CD4-positive, alpha-beta T cell (primary cell): ENCODE measurements at regions of chr1 and their contacts with region 1.

Region 1: GRCh38 chr1:10032590-10033358 is at the start of gene UBE4B:
- DNase-seq: peak; percentile 96 to 100 (median 99)
- ATAC-seq: peak; percentile 93
- H3K4me3 ChIP-seq: peak within 1 kb of the TSS; percentile 99
- H3K4me3 Mint-ChIP-seq: peak within 1 kb of the TSS; percentile 98
- H3K27ac ChIP-seq: peak within 1 kb of the TSS; percentile 91 to 95
- H3K27ac Mint-ChIP-seq: peak within 1 kb of the TSS; percentile 99
- H3K4me1 ChIP-seq: peaks cover 28% of the 10 kb centered on the region
- H3K4me1 Mint-ChIP-seq: peaks cover 30% of the 10 kb centered on the region
- H3K27me3 ChIP-seq: no peaks in the 10 kb centered on the region
- H3K27me3 Mint-ChIP-seq: no peaks in the 10 kb centered on the region
- CTCF ChIP-seq: peak; percentile 74
- total RNA-seq, gene UBE4B: 27.9 to 28.7 TPM

Region 2: DNA sequence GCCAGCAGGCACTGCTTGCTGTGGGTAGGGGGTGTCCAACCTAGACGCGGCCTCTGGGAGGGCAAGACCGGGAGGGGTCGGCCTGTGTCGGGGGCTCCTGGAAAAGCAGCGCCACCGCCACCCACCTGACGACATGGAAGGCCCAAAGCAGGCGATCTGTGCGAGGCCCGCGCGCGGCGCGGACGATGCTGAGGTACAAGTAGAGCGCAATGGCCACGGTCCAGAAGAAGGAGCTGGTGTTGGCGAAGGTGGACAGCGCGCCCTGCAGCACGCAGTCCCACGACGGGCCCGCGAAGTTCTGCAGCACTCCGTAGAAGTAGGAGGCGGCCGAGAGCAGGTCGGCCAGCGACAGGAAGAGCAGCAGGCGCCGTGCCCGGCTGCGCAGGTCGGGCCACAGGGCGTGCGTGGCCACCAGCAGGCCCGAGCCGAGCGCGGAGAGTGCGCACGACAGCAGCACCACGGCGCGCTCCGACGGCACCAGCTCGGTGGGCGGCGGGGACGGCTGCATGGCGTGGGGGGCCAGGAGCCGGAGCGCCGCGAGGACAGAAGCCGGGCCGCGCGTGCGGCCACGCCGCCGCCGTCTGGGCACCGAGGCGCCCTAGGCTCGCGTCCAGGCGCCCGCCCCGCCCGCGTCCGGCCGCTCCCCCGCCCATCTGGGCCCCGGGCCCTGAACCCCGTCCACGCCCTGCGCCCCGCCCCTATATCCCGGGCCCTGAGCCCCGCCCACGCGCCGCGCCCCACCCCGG is 904.1 kb before region 1 on chr1 and contains the start of gene GPR157:
- CTCF ChIA-PET with region 1: no interaction called
- POLR2A ChIA-PET with region 1: no interaction called
- intact Hi-C with region 1: loop called in 1 of 2 experiments (anchors 5 kb)
- DNase-seq: peak; percentile 65 to 93 (median 81)
- ATAC-seq: peak; percentile 86
- H3K4me3 ChIP-seq: peak within 1 kb of the TSS; percentile 70
- H3K4me3 Mint-ChIP-seq: peak within 1 kb of the TSS; percentile 91
- H3K27ac ChIP-seq: peak within 1 kb of the TSS; percentile 56
- H3K27ac Mint-ChIP-seq: peak within 1 kb of the TSS; percentile 70
- H3K4me1 ChIP-seq: peaks cover 25% of the 10 kb centered on the region
- H3K4me1 Mint-ChIP-seq: peaks cover 40% of the 10 kb centered on the region
- H3K27me3 ChIP-seq: no peaks in the 10 kb centered on the region
- H3K27me3 Mint-ChIP-seq: no peaks in the 10 kb centered on the region
- CTCF ChIP-seq: no peak
- total RNA-seq, gene GPR157: 2.1 to 5.1 TPM

Region 3: GRCh38 chr1:9588551-9589143 is 444.1 kb before region 1 on chr1 and contains the start of gene TMEM201:
- CTCF ChIA-PET with region 1: no interaction called
- POLR2A ChIA-PET with region 1: no interaction called
- intact Hi-C with region 1: loop called in 1 of 2 experiments (anchors 5 kb)
- DNase-seq: peak; percentile 87 to 98 (median 94)
- ATAC-seq: peak; percentile 91
- H3K4me3 ChIP-seq: peak within 1 kb of the TSS; percentile 66
- H3K4me3 Mint-ChIP-seq: peak within 1 kb of the TSS; percentile 92
- H3K27ac ChIP-seq: no peak within 1 kb of the TSS
- H3K27ac Mint-ChIP-seq: peak within 1 kb of the TSS; percentile 65
- H3K4me1 ChIP-seq: peaks cover 38% of the 10 kb centered on the region
- H3K4me1 Mint-ChIP-seq: peaks cover 33% of the 10 kb centered on the region
- H3K27me3 ChIP-seq: no peaks in the 10 kb centered on the region
- H3K27me3 Mint-ChIP-seq: no peaks in the 10 kb centered on the region
- CTCF ChIP-seq: peak; percentile 6
- total RNA-seq, gene TMEM201: 9.1 to 9.2 TPM

Region 4: GRCh38 chr1:9874959-9875635 is 157.7 kb before region 1 on chr1:
- CTCF ChIA-PET with region 1: no interaction called
- POLR2A ChIA-PET with region 1: no interaction called
- intact Hi-C with region 1: loop called (anchors 1 kb)
- DNase-seq: peak; percentile 62 to 87 (median 68)
- ATAC-seq: peak; percentile 99
- H3K4me3 ChIP-seq: no peak overlapping the region
- H3K4me3 Mint-ChIP-seq: no peak overlapping the region
- H3K27ac ChIP-seq: no peak overlapping the region
- H3K27ac Mint-ChIP-seq: no peak overlapping the region
- H3K4me1 ChIP-seq: peaks cover 7% of the 10 kb centered on the region
- H3K4me1 Mint-ChIP-seq: peaks cover 7% of the 10 kb centered on the region
- H3K27me3 ChIP-seq: no peaks in the 10 kb centered on the region
- H3K27me3 Mint-ChIP-seq: no peaks in the 10 kb centered on the region
- CTCF ChIP-seq: peak; percentile 93

Region 5: GRCh38 chr1:10209905-10210810 is 177.4 kb after region 1 on chr1 and contains the start of gene KIF1B:
- CTCF ChIA-PET with region 1: no interaction called
- POLR2A ChIA-PET with region 1: no interaction called
- intact Hi-C with region 1: loop called in 1 of 2 experiments (anchors 5 kb)
- DNase-seq: peak; percentile 91 to 98 (median 96)
- ATAC-seq: peak; percentile 99
- H3K4me3 ChIP-seq: peak within 1 kb of the TSS; percentile 76
- H3K4me3 Mint-ChIP-seq: peak within 1 kb of the TSS; percentile 94
- H3K27ac ChIP-seq: no peak within 1 kb of the TSS
- H3K27ac Mint-ChIP-seq: peak within 1 kb of the TSS; percentile 82
- H3K4me1 ChIP-seq: peaks cover 17% of the 10 kb centered on the region
- H3K4me1 Mint-ChIP-seq: peaks cover 37% of the 10 kb centered on the region
- H3K27me3 ChIP-seq: no peaks in the 10 kb centered on the region
- H3K27me3 Mint-ChIP-seq: peaks cover 4% of the 10 kb centered on the region
- CTCF ChIP-seq: peak; percentile 99
- total RNA-seq, gene KIF1B: 7.9 to 9.7 TPM

Region 6: DNA sequence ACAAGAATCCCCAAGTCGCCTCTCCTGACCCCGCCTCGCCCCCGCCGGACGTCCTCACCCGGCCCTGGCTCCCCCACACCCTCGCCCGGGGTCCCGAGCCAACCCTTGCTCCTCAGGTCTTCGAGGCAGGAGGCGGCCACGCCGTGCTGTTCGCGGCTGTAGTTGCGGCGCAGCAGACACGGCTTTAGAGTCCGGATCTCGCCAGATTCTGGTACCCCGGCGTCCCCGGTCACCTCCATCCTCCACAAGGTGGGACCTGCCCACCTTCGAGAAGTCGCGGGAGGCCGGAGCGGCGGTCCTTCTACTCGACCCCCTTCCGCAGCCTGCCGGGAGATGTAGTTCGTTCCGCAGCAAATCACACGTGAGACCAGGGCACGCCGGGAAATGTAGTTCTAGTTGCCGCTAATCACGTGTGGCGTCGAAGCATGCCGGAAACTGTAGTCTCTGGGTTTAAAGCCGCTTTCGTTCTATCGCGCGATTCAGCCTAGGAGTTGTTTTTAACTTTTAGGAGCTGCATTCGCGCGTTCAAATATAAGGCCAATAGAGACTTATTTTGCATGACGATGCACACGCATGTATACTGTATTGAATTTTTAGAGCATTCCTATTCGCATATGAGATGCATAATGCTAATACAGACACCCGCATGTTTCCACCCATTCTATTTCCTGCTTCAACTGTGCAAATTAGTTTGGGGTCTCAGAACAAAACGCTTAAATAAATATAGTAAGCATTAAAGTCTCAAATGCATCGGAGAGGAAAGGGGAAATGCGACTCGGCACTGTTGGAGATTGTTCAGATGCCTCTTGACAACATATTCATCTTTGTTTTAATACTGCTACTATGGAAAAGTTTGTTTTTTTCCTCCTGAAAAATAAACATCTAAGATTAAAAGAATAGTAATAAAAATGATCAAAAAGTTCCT is 439.7 kb after region 1 on chr1 and contains the start of gene DFFA:
- CTCF ChIA-PET with region 1: no interaction called
- POLR2A ChIA-PET with region 1: no interaction called
- intact Hi-C with region 1: loop called in 1 of 2 experiments (anchors 2 kb)
- DNase-seq: peak; percentile 77 to 96 (median 87)
- ATAC-seq: peak; percentile 83
- H3K4me3 ChIP-seq: peak within 1 kb of the TSS; percentile 79
- H3K4me3 Mint-ChIP-seq: peak within 1 kb of the TSS; percentile 89
- H3K27ac ChIP-seq: peak within 1 kb of the TSS; percentile 27 to 38
- H3K27ac Mint-ChIP-seq: peak within 1 kb of the TSS; percentile 75
- H3K4me1 ChIP-seq: peaks cover 45% of the 10 kb centered on the region
- H3K4me1 Mint-ChIP-seq: peaks cover 50% of the 10 kb centered on the region
- H3K27me3 ChIP-seq: no peaks in the 10 kb centered on the region
- H3K27me3 Mint-ChIP-seq: no peaks in the 10 kb centered on the region
- CTCF ChIP-seq: no peak
- total RNA-seq, gene DFFA: 7.4 to 9.1 TPM